B cell (primary cell): ENCODE measurements at regions of chr20 and their contacts with region 1.

Region 1: GRCh38 chr20:18566892-18567742 is at the start of gene SMIM26:
- DNase-seq: peak; percentile 95
- ATAC-seq: peak; percentile 98
- H3K4me3 ChIP-seq: peak within 1 kb of the TSS; percentile 67 to 88 (median 80)
- H3K4me3 Mint-ChIP-seq: peak within 1 kb of the TSS; percentile 99
- H3K27ac ChIP-seq: peak within 1 kb of the TSS; percentile 84 to 91
- H3K27ac Mint-ChIP-seq: peak within 1 kb of the TSS; percentile 97
- H3K4me1 ChIP-seq: peaks cover 12 to 13% of the 10 kb centered on the region in 2 donors
- H3K4me1 Mint-ChIP-seq: peaks cover 18% of the 10 kb centered on the region
- H3K27me3 ChIP-seq: no peaks in the 10 kb centered on the region
- H3K27me3 Mint-ChIP-seq: no peaks in the 10 kb centered on the region
- CTCF ChIP-seq: no peak
- total RNA-seq, gene SMIM26: 47.4 and 47.7 TPM in 2 replicates

Region 2: DNA sequence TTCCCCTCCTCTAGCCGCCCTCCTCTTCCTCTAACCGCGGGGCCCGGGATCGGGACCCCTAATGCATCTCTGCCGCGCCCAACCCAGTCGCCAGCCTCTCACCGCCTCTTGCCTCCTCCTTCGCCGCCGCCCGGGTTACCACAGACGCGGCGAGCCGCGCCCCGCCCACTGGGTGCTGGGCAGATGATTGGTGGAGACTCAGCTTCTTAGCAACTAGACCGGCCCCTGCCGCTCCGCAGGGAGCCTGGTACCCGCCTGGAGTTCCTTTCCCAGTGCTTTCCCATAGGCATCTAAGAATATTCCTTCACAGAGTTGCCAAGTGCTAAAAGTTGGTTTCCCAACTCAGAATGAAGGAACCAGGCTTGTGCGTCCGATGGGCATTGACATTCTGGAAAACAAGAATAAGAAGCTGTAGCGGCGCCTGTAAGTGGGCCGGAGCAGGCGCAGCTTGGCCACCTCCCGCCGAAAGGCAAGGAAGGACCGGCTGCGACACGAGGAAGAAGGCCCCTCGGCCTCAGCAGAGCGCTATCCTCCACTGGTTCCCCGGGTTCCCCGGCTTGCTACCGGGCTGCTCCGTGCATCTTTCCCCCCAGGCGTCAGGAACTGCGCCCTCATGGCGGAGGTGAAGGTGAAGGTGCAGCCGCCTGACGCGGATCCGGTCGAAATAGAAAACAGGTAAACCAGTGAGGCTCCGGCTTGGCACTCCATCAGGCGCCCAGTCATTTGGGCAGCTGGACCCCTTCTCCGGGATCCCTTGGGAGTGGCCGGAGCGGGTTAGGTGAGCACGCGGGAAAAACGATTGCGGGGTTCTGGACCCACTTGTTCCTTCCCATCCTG is 100.0 kb before region 1 on chr20 and contains the starts of genes DZANK1 and POLR3F:
- CTCF ChIA-PET with region 1: no interaction called
- POLR2A ChIA-PET with region 1: interaction called, 3 read pairs
- intact Hi-C with region 1: loop called (anchors 1 kb)
- DNase-seq: peak; percentile 94
- ATAC-seq: peak; percentile 95
- H3K4me3 ChIP-seq: peak within 1 kb of the TSS; percentile 54 to 97 (median 85)
- H3K4me3 Mint-ChIP-seq: peak within 1 kb of the TSS; percentile 97
- H3K27ac ChIP-seq: peak within 1 kb of the TSS; percentile 39 to 81
- H3K27ac Mint-ChIP-seq: peak within 1 kb of the TSS; percentile 97
- H3K4me1 ChIP-seq: peaks cover 12 to 15% of the 10 kb centered on the region in 2 donors
- H3K4me1 Mint-ChIP-seq: peaks cover 25% of the 10 kb centered on the region
- H3K27me3 ChIP-seq: no peaks in the 10 kb centered on the region
- H3K27me3 Mint-ChIP-seq: no peaks in the 10 kb centered on the region
- CTCF ChIP-seq: no peak
- total RNA-seq, gene DZANK1: 5.6 TPM in 2 replicates
- total RNA-seq, gene POLR3F: 13.1 and 13.7 TPM in 2 replicates

Region 3: GRCh38 chr20:18496740-18497592 is 70.2 kb before region 1 on chr20 and contains the start of gene RBBP9:
- CTCF ChIA-PET with region 1: no interaction called
- POLR2A ChIA-PET with region 1: interaction called, 3 read pairs
- intact Hi-C with region 1: loop called (anchors 1 kb)
- DNase-seq: peak; percentile 81
- ATAC-seq: peak; percentile 100
- H3K4me3 ChIP-seq: peak within 1 kb of the TSS; percentile 74 to 96 (median 87)
- H3K4me3 Mint-ChIP-seq: peak within 1 kb of the TSS; percentile 98
- H3K27ac ChIP-seq: peak within 1 kb of the TSS; percentile 38 to 78
- H3K27ac Mint-ChIP-seq: peak within 1 kb of the TSS; percentile 89
- H3K4me1 ChIP-seq: peaks cover 7 to 11% of the 10 kb centered on the region in 2 donors
- H3K4me1 Mint-ChIP-seq: peaks cover 18% of the 10 kb centered on the region
- H3K27me3 ChIP-seq: no peaks in the 10 kb centered on the region
- H3K27me3 Mint-ChIP-seq: peaks cover 3% of the 10 kb centered on the region
- CTCF ChIP-seq: no peak
- total RNA-seq, gene RBBP9: 9.3 and 10.2 TPM in 2 replicates

Region 4: GRCh38 chr20:18587665-18588573 is 20.8 kb after region 1 on chr20 and contains the start of gene DTD1:
- CTCF ChIA-PET with region 1: interaction called, 4 read pairs
- POLR2A ChIA-PET with region 1: interaction called, 8 read pairs
- intact Hi-C with region 1: loop called (anchors 1 kb)
- DNase-seq: peak; percentile 89
- ATAC-seq: peak; percentile 96
- H3K4me3 ChIP-seq: peak within 1 kb of the TSS; percentile 47 to 77 (median 73)
- H3K4me3 Mint-ChIP-seq: peak within 1 kb of the TSS; percentile 94
- H3K27ac ChIP-seq: peak within 1 kb of the TSS; percentile 44 to 58
- H3K27ac Mint-ChIP-seq: peak within 1 kb of the TSS; percentile 86
- H3K4me1 ChIP-seq: peaks cover 17% of the 10 kb centered on the region in 2 donors
- H3K4me1 Mint-ChIP-seq: peaks cover 23% of the 10 kb centered on the region
- H3K27me3 ChIP-seq: peaks cover 0 to 10% (median 2%) of the 10 kb centered on the region in 4 experiments
- H3K27me3 Mint-ChIP-seq: peaks cover 8% of the 10 kb centered on the region
- CTCF ChIP-seq: peak; percentile 68
- total RNA-seq, gene DTD1: 18.7 and 18.9 TPM in 2 replicates

Region 5: GRCh38 chr20:18596270-18596669 is 29.2 kb after region 1 on chr20:
- CTCF ChIA-PET with region 1: interaction called, 4 read pairs
- POLR2A ChIA-PET with region 1: interaction called, 10 read pairs
- intact Hi-C with region 1: no loop called
- DNase-seq: no peak
- ATAC-seq: no peak
- H3K4me3 ChIP-seq: no peak overlapping the region
- H3K4me3 Mint-ChIP-seq: no peak overlapping the region
- H3K27ac ChIP-seq: no peak overlapping the region
- H3K27ac Mint-ChIP-seq: no peak overlapping the region
- H3K4me1 ChIP-seq: no peaks in the 10 kb centered on the region
- H3K4me1 Mint-ChIP-seq: no peaks in the 10 kb centered on the region
- H3K27me3 ChIP-seq: no peaks in the 10 kb centered on the region
- H3K27me3 Mint-ChIP-seq: no peaks in the 10 kb centered on the region
- CTCF ChIP-seq: no peak

Region 6: DNA sequence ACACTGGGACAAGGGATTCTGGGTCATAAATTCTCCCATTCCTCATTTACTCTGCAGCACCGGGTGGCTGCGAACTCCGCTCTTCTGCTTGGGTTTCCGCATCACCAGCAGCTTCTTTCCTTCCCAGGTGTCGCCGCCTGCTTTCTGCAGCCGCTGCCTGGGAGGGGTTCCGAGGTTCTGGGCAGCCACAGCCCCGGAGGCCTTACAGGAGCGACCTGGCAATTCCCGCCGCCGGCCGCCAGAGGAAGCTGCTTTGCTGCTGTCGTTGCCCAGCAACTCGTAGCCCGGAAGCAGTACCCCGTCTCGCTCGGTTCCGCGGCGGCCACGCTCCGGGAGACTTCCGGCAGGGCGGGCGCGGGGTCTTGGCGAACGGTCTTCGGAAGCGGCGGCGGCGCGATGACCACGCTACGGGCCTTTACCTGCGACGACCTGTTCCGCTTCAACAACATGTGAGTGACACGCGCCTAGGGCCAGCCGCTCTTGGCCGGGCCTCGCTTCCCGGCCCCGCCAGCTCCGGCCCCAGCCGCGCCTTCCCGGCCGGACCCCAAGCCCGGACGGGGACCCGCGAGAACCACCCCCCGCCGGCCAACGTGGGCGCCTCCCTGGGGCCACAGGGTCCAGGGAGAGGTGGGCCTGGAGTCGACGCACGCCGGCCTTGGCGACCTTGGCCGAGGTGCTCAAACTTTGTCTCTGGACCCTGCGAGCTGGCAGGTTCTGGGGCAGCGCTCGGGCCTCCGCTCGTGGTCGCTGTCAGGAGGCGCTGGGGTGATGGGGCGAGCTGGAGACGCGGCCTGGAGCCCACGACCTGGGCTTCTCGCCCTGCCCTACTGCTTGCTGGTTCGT is 1450.1 kb after region 1 on chr20 and contains the start of gene NAA20:
- CTCF ChIA-PET with region 1: no interaction called
- POLR2A ChIA-PET with region 1: no interaction called
- intact Hi-C with region 1: loop called (anchors 10 kb)
- DNase-seq: peak; percentile 91
- ATAC-seq: peak; percentile 98
- H3K4me3 ChIP-seq: peak within 1 kb of the TSS; percentile 41 to 91 (median 83)
- H3K4me3 Mint-ChIP-seq: peak within 1 kb of the TSS; percentile 94
- H3K27ac ChIP-seq: peak within 1 kb of the TSS; percentile 1 to 86
- H3K27ac Mint-ChIP-seq: peak within 1 kb of the TSS; percentile 94
- H3K4me1 ChIP-seq: peaks cover 12 to 27% of the 10 kb centered on the region in 2 donors
- H3K4me1 Mint-ChIP-seq: peaks cover 42% of the 10 kb centered on the region
- H3K27me3 ChIP-seq: no peaks in the 10 kb centered on the region
- H3K27me3 Mint-ChIP-seq: no peaks in the 10 kb centered on the region
- CTCF ChIP-seq: peak; percentile 73
- total RNA-seq, gene NAA20: 25.5 and 27.1 TPM in 2 replicates

Region 7: DNA sequence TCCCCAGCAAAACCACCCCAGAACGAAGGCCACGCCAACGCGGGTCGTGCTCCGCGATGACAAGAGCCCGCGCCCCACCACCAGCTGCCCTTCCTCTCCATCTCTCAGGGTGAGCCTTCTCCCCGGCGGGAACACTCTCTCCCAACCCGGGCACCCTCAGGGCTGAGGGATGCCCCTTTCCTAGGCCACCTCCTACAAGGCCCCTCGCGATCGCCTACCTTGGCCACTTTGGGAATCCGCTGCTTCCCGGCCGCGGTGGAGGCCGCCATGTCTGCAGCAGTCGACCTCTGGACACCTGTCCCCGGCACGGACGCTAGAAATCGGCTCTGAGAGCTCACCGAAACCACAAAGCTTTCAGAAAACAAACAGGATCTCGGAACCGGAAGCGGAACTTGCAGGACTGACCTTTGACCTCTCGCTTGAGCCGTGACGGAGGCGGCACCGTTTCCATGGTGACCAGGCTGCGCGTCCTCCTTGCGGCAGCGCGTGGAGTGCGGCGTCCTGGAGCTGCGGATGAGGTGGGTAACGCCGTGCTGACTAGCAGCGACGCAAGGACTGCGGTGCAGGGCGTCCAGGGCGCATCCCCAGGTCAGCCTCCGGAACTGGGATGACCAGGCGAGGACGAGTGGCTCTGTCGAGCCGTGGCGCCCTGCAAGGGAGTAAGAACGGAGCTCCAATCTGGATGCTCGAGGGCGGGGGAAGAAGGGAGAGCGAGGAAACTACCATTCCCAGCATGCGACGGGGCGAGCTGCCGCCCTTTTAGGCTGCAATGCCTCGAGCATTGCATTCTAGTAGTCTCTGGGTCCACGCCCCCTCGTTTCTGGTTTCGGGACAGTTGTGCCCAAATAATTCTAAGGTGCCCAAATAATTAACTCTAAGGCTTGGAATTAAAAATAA is 1485.2 kb after region 1 on chr20 and contains the starts of genes CFAP61 and CRNKL1:
- CTCF ChIA-PET with region 1: no interaction called
- POLR2A ChIA-PET with region 1: no interaction called
- intact Hi-C with region 1: loop called (anchors 1 kb)
- DNase-seq: peak; percentile 99
- ATAC-seq: peak; percentile 93
- H3K4me3 ChIP-seq: peak within 1 kb of the TSS; percentile 85 to 98 (median 97)
- H3K4me3 Mint-ChIP-seq: peak within 1 kb of the TSS; percentile 99
- H3K27ac ChIP-seq: peak within 1 kb of the TSS; percentile 78 to 91
- H3K27ac Mint-ChIP-seq: peak within 1 kb of the TSS; percentile 97
- H3K4me1 ChIP-seq: peaks cover 7 to 14% of the 10 kb centered on the region in 2 donors
- H3K4me1 Mint-ChIP-seq: peaks cover 23% of the 10 kb centered on the region
- H3K27me3 ChIP-seq: peaks cover 0 to 9% (median 5%) of the 10 kb centered on the region in 4 experiments
- H3K27me3 Mint-ChIP-seq: peaks cover 7% of the 10 kb centered on the region
- CTCF ChIP-seq: no peak
- total RNA-seq, gene CFAP61: not detected in 2 replicates
- total RNA-seq, gene CRNKL1: 25.5 and 32.1 TPM in 2 replicates